ENCODE measurements at regions of chr14 and their contacts with region 1.

Region 1: GRCh38 chr14:51239813-51240803 is at the start of gene TMX1:
- DNase-seq: peak; percentile 97 to 98
- H3K4me3 ChIP-seq: peak within 1 kb of the TSS; percentile 85
- H3K4me1 ChIP-seq: peaks cover 23% of the 10 kb centered on the region
- H3K27me3 ChIP-seq: no peaks in the 10 kb centered on the region

Region 2: GRCh38 chr14:50943943-50944646 is 296.0 kb before region 1 on chr14 and contains the start of gene PYGL:
- in situ Hi-C with region 1: loop called (anchors 10 kb)
- DNase-seq: peak; percentile 66 to 90
- H3K4me3 ChIP-seq: peak within 1 kb of the TSS; percentile 70
- H3K4me1 ChIP-seq: peaks cover 16% of the 10 kb centered on the region
- H3K27me3 ChIP-seq: no peaks in the 10 kb centered on the region

Region 3: GRCh38 chr14:51094901-51095853 is 144.9 kb before region 1 on chr14 and contains the start of gene TRIM9:
- in situ Hi-C with region 1: loop called (anchors 5 kb)
- DNase-seq: peak; percentile 96 to 99
- H3K4me3 ChIP-seq: peak within 1 kb of the TSS; percentile 63
- H3K4me1 ChIP-seq: peaks cover 41% of the 10 kb centered on the region
- H3K27me3 ChIP-seq: no peaks in the 10 kb centered on the region